Gastrocnemius medialis (tissue), 4 donors: ENCODE measurements at regions of chr2 and their contacts with region 1.

Region 1: DNA sequence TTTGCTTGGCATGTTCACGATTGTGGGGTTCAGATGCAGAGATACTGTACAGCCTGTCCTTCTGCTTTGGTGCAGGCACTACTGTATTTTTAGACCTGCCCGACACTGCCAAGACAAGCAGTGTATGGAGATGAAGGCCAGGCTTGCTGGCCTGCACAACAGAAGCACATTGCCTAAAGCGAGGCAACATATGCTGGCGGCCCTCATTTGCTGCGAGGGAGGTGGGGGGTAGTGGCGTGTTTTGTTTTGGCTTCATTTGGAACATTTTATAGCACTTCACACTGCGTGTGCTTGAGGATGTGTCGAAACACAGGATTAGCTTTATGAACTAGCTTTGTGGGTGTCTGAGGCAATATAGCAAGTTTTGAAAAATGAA is 27.0 kb downstream of the TMEM182 start:
- DNase-seq: peak; percentile 73 to 81
- ATAC-seq: peak; percentile 92 to 97
- H3K4me3 ChIP-seq: no peak overlapping the region
- H3K27ac ChIP-seq: peak overlapping the region; percentile 54 to 78 (median 69)
- H3K4me1 ChIP-seq: peaks cover 66% of the 10 kb centered on the region in 2 donors
- H3K27me3 ChIP-seq: no peaks in the 10 kb centered on the region
- CTCF ChIP-seq: no peak
- POLR2A ChIP-seq: no peak

Region 2: GRCh38 chr2:102592597-102592996 is 196.3 kb before region 1 on chr2:
- in situ Hi-C with region 1: no loop called
- intact Hi-C with region 1: no loop called
- DNase-seq: no peak
- ATAC-seq: no peak
- H3K4me3 ChIP-seq: no peak overlapping the region
- H3K27ac ChIP-seq: no peak overlapping the region
- H3K4me1 ChIP-seq: peaks cover 0 to 9% of the 10 kb centered on the region in 2 donors
- H3K27me3 ChIP-seq: no peaks in the 10 kb centered on the region
- CTCF ChIP-seq: peak in 1 of 5 experiments; percentile 19
- POLR2A ChIP-seq: no peak

Region 3: GRCh38 chr2:102806250-102806837 is 17.5 kb after region 1 on chr2:
- in situ Hi-C with region 1: no loop called
- intact Hi-C with region 1: loop called (anchors 2 kb)
- DNase-seq: peak; percentile 80 to 90
- ATAC-seq: peak; percentile 87 to 91
- H3K4me3 ChIP-seq: no peak overlapping the region
- H3K27ac ChIP-seq: peak overlapping the region; percentile 55 to 86 (median 78)
- H3K4me1 ChIP-seq: peaks cover 56 to 71% of the 10 kb centered on the region in 2 donors
- H3K27me3 ChIP-seq: no peaks in the 10 kb centered on the region
- CTCF ChIP-seq: peak; percentile 81 to 88 (median 85)
- POLR2A ChIP-seq: no peak